MCF 10A (cell line): ENCODE measurements at regions of chr19 and their contacts with region 1.

Region 1: DNA sequence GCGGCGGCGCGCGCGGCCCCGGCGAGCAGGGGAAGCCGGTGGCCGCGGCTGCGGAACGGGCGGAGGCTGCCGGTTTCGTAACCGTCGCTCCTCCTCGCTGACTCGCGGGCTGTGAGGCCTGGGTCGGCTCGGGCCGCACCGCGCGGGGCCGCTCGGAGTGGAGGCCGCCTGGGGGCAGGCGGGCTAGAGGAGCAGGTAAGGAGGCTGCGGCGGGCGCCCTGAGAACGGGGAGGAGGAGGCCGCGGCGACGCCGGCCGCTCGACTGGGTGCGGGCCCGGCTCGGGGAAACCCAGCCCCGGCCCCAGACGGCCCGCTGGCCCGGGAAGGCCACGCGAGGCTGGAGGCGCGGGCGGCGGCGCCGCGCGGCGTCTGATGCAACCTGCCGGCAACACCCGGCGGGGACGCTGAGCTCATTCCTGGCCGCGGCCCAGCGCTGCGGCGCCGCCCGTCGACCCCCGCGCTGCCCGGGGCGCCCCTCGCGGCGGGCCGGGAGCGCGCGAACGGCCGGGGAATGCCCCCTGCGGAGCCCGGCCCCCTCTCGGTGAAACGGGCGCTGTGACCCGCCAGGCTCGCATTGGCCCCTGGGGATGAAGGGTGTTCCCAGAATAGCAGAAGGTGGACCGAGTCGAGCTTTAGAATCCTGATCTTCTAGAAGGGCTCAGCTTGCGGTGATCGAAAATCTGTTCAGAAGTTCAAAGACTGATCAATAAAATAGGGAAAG is at the start of gene CEBPG:
- DNase-seq: peak; percentile 91
- H3K4me3 Mint-ChIP-seq: peak within 1 kb of the TSS; percentile 89
- H3K27ac Mint-ChIP-seq: peak within 1 kb of the TSS; percentile 94
- H3K4me1 Mint-ChIP-seq: peaks cover 41% of the 10 kb centered on the region
- H3K27me3 Mint-ChIP-seq: no peaks in the 10 kb centered on the region
- CTCF ChIP-seq: no peak
- total RNA-seq, gene CEBPG: 78.5 and 91.3 TPM in 2 replicates

Region 2: GRCh38 chr19:33110137-33110910 is 263.5 kb before region 1 on chr19:
- CTCF ChIA-PET with region 1: no interaction called
- POLR2A ChIA-PET with region 1: no interaction called
- intact Hi-C with region 1: no loop called
- DNase-seq: no peak
- H3K4me3 Mint-ChIP-seq: no peak overlapping the region
- H3K27ac Mint-ChIP-seq: no peak overlapping the region
- H3K4me1 Mint-ChIP-seq: no peaks in the 10 kb centered on the region
- H3K27me3 Mint-ChIP-seq: no peaks in the 10 kb centered on the region
- CTCF ChIP-seq: no peak

Region 3: DNA sequence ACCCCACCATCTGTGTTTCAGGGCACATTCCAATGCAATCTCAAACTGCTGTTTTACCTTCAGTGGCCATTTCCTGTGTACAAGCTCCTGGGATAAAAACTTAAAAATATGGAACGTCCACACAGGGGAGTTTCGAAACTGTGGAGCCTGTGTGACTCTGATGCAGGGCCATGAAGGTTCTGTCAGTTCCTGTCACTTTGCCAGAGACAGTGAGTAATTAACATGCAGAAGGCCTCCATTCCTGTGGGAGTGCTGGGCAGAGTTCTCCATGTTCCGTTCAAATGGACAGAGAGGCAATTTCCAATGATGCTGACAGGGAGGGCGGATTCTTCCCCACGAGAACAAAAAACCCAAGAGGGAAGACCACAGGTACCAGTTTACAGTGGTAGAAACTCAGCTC is 217.5 kb before region 1 on chr19:
- CTCF ChIA-PET with region 1: no interaction called
- POLR2A ChIA-PET with region 1: no interaction called
- intact Hi-C with region 1: no loop called
- DNase-seq: peak; percentile 80
- H3K4me3 Mint-ChIP-seq: no peak overlapping the region
- H3K27ac Mint-ChIP-seq: no peak overlapping the region
- H3K4me1 Mint-ChIP-seq: no peaks in the 10 kb centered on the region
- H3K27me3 Mint-ChIP-seq: no peaks in the 10 kb centered on the region
- CTCF ChIP-seq: no peak

Region 4: DNA sequence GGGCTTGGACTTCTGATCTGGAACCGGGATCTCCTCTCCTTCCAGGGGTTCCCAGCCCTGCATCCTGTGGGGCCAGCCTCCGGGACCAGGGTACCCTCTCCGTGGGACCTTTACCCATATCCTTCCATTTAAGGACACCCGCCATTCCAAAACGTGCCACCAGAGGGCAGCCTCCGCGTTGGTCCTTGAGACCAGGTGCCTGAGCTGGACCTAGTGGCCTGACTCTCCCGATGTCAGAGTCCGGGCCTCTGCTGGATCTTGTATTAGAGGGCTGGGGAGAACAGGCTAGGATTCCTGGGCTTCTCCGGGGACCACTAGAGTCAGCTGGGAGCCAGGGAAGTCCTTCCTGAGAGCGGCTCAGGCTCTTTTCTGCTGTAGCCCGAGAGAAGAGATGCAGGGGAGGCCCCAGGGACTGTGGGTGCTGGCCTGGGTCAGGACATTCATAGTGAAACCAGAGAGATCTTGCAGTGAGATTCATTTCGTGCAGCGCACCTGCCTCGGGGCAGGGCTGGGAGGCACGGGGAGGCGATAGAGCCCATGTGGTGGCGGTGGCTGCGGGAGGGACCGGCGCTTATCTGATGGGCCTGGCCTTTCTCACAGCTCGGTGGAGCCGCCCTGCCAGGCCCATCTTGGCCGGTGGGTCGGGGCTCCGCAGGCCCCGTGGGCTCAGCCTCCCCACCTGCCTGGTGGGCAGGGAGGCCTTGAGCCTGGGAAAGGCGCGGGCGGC is 138.4 kb before region 1 on chr19:
- CTCF ChIA-PET with region 1: interaction called, 10 read pairs
- POLR2A ChIA-PET with region 1: no interaction called
- intact Hi-C with region 1: no loop called
- DNase-seq: peak; percentile 80
- H3K4me3 Mint-ChIP-seq: no peak overlapping the region
- H3K27ac Mint-ChIP-seq: no peak overlapping the region
- H3K4me1 Mint-ChIP-seq: no peaks in the 10 kb centered on the region
- H3K27me3 Mint-ChIP-seq: no peaks in the 10 kb centered on the region
- CTCF ChIP-seq: peak; percentile 86

Region 5: GRCh38 chr19:33302175-33302973 is 71.5 kb before region 1 on chr19 and contains the start of gene CEBPA:
- CTCF ChIA-PET with region 1: interaction called, 11 read pairs
- POLR2A ChIA-PET with region 1: interaction called, 110 read pairs
- intact Hi-C with region 1: loop called (anchors 2 kb)
- DNase-seq: peak; percentile 86
- H3K4me3 Mint-ChIP-seq: peak within 1 kb of the TSS; percentile 75
- H3K27ac Mint-ChIP-seq: no peak within 1 kb of the TSS
- H3K4me1 Mint-ChIP-seq: no peaks in the 10 kb centered on the region
- H3K27me3 Mint-ChIP-seq: no peaks in the 10 kb centered on the region
- CTCF ChIP-seq: peak; percentile 39
- total RNA-seq, gene CEBPA: 4.7 and 6.2 TPM in 2 replicates

Region 6: GRCh38 chr19:33350538-33351309 is 23.1 kb before region 1 on chr19:
- CTCF ChIA-PET with region 1: interaction called, 7 read pairs
- POLR2A ChIA-PET with region 1: interaction called, 81 read pairs
- intact Hi-C with region 1: loop called (anchors 2 kb)
- DNase-seq: peak; percentile 99
- H3K4me3 Mint-ChIP-seq: peak overlapping the region; percentile 38
- H3K27ac Mint-ChIP-seq: peak overlapping the region; percentile 84
- H3K4me1 Mint-ChIP-seq: peaks cover 18% of the 10 kb centered on the region
- H3K27me3 Mint-ChIP-seq: no peaks in the 10 kb centered on the region
- CTCF ChIP-seq: no peak

Region 7: DNA sequence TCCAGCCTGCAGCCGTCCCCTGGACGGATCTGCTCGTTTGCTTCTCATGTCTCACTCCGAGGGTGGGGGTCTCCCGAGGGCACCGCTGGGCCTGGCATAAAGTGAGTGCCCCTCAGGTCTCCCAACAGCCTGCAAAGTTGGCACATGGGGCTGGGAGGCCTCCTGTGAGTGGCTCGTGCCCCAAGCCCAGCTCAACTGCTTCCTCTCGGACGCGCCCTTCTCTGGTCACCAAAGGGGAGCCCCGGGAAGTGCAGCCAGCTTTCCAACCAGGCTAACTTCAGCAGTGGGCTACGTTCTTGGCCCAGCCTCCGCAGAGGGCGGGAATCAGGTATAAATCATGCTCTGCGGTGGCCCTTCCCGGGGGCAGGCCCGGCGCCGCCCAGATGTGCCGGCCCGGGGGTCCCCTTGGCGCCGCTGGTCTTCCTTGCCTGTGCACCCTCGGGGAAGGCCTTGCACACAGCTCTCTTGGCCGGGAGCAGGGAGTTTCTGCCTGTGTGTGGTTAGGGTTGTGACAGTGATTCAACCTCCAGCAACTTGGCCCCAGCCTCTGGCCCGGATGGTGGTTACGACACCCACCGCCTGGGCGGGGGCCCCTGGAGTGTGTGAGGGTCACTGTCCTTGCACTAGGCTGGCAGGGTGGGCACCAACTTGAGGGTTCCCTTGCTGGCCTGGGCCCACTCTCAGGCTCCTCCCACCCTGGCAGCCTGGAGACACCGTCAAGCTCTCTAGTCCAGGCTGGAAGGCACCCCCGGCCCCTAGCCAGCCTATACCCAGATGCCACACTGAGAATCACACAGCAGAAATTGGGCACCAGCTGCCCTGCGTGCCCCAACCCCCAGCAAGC is 20.4 kb after region 1 on chr19:
- CTCF ChIA-PET with region 1: interaction called, 4 read pairs
- POLR2A ChIA-PET with region 1: interaction called, 11 read pairs
- intact Hi-C with region 1: no loop called
- DNase-seq: peak; percentile 89
- H3K4me3 Mint-ChIP-seq: no peak overlapping the region
- H3K27ac Mint-ChIP-seq: peak overlapping the region; percentile 51
- H3K4me1 Mint-ChIP-seq: peaks cover 17% of the 10 kb centered on the region
- H3K27me3 Mint-ChIP-seq: no peaks in the 10 kb centered on the region
- CTCF ChIP-seq: no peak

Region 8: DNA sequence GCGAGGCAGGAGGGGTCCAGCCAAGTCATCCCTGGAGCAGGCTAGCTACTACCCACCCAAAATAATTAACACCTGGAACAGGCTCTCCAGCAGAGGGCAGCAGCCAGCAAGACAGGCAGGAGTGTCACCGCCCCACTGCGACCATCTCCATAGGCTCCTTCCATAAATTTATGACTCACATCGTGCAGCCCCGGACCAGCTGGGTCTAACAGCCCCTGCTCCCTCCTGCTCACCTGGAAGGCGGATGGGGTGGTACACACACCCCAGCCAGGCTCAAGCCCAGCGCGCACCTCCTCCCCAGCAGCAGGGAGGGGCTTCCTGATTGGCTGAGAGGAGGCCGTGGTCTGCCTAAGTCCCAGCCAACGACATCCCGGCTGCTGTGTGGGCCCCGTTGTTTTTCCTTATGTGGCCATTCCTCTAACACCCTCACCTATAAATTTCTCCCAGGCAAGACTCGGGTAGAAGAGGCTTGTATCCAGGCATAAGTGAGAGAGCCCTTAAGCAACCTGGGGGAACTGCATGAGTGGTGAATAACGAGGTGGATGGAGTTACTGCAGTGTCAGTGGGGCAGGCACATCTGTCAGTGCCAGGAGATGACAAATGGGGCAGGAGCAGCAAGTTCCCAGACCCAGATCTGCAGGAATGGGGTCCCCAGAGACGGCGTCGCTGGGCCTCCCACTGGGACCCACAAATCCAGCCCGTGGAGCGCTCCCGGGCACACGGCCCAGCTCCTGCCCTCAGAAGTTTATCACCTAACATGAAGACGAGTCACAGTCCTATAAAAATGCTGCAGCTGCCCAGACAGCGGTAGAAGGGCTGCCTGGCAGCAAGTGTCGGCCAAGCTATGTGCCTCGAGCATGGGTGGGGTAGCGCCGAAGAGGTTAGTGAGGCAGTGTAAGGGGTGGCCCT is 42.7 kb after region 1 on chr19:
- CTCF ChIA-PET with region 1: no interaction called
- POLR2A ChIA-PET with region 1: no interaction called
- intact Hi-C with region 1: no loop called
- DNase-seq: peak; percentile 74
- H3K4me3 Mint-ChIP-seq: no peak overlapping the region
- H3K27ac Mint-ChIP-seq: no peak overlapping the region
- H3K4me1 Mint-ChIP-seq: no peaks in the 10 kb centered on the region
- H3K27me3 Mint-ChIP-seq: no peaks in the 10 kb centered on the region
- CTCF ChIP-seq: peak; percentile 70